H1 (cell line): ENCODE measurements at regions of chr3 and their contacts with region 1.

Region 1: GRCh38 chr3:49703443-49703927 is 14.1 kb downstream of the RNF123 start:
- DNase-seq: peak in 1 of 2 experiments; percentile 76
- H3K4me3 ChIP-seq: no peak overlapping the region
- H3K27ac ChIP-seq: no peak overlapping the region
- H3K4me1 ChIP-seq: peaks cover 0 to 9% (median 5%) of the 10 kb centered on the region in 4 experiments; a peak in 5 of 7 replicates
- H3K27me3 ChIP-seq: no peaks in the 10 kb centered on the region
- CTCF ChIP-seq: peak in 2 of 3 experiments; percentile 87 to 97; a peak in 3 of 4 replicates
- EP300 ChIP-seq: no peak
- POLR2A ChIP-seq: no peak
- RAD21 ChIP-seq: peak; percentile 88 to 91

Region 2: GRCh38 chr3:49634736-49635135 is 68.7 kb before region 1 on chr3:
- CTCF ChIA-PET with region 1: no interaction called
- POLR2A ChIA-PET with region 1: no interaction called
- DNase-seq: no peak
- H3K4me3 ChIP-seq: no peak overlapping the region
- H3K27ac ChIP-seq: no peak overlapping the region
- H3K4me1 ChIP-seq: peaks cover 0 to 3% (median 0%) of the 10 kb centered on the region in 4 experiments; a peak in 1 of 7 replicates
- H3K27me3 ChIP-seq: no peaks in the 10 kb centered on the region
- CTCF ChIP-seq: peak in 2 of 3 experiments; percentile 31 to 43; a peak in 3 of 4 replicates
- EP300 ChIP-seq: no peak
- POLR2A ChIP-seq: no peak
- RAD21 ChIP-seq: peak in 1 of 2 experiments; percentile 44; a peak in 2 of 4 replicates

Region 3: DNA sequence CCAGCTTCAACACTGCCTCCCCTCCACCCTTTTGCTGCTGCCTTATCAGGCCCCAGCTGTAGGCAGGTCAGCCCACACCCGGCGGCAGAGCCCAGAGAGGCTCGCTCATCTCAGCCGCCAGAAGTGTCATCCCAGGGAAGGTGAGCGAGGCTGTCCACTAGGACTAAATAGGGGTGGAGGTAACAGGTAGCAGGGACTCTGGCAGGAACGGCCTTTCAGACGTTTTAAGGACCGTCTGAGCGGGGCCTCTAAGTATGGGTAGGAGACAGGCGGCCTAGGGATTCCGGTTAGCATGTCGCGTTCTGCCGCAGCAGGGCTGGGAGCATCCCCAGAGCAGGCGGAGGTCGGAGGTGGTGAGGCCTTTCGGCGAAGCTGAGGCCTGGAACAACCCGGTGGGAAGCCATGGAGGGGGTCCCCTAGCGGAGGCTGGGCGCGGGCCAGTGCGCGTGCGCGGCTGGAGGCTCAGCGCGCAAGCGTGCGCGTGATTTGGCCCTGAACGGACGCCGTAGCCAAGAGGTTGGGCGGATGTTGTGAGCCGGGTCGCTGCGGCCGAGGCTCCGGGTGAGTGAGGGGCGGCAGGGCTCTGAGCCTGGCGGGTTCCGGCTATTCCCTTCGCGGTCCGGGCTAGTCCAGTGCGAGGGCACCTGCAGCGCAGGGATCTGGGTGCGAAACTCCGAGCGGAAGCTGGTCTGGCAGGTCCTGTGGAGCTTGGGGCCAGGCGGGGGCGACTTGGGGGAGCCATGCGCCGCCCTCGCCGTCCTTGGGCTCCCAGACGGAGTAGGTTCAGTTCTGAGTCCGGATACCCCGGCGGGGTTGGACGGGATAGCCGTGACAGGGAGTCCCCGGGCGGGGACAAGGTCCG is 14.2 kb before region 1 on chr3 and contains the starts of genes MST1 and RNF123:
- CTCF ChIA-PET with region 1: interaction called, 11 read pairs
- POLR2A ChIA-PET with region 1: interaction called, 3 read pairs
- DNase-seq: peak; percentile 81 to 98
- H3K4me3 ChIP-seq: peak within 1 kb of the TSS; percentile 81 to 98 (median 88)
- H3K27ac ChIP-seq: no peak within 1 kb of the TSS
- H3K4me1 ChIP-seq: peaks cover 0 to 8% (median 2%) of the 10 kb centered on the region in 4 experiments; a peak in 6 of 7 replicates
- H3K27me3 ChIP-seq: peaks cover 0 to 3% (median 3%) of the 10 kb centered on the region in 4 experiments; a peak in 2 of 7 replicates
- CTCF ChIP-seq: peak in 2 of 3 experiments; percentile 4 to 29; a peak in 2 of 4 replicates
- EP300 ChIP-seq: 0 out of 3 replicates have a peak, but pooled peaks of 1 of the 2 experiments have one; percentile 8
- POLR2A ChIP-seq: peak in 1 of 2 experiments; percentile 74; a peak in 2 of 3 replicates
- RAD21 ChIP-seq: no peak
- total RNA-seq, gene MST1: 6.2 and 8.5 TPM in 2 replicates
- total RNA-seq, gene RNF123: 30.5 and 34.2 TPM in 2 replicates

Region 4: GRCh38 chr3:49813497-49814174 is 110.2 kb after region 1 on chr3 and contains the start of gene UBA7:
- CTCF ChIA-PET with region 1: interaction called, 11 read pairs
- POLR2A ChIA-PET with region 1: no interaction called
- DNase-seq: no peak
- H3K4me3 ChIP-seq: no peak within 1 kb of the TSS
- H3K27ac ChIP-seq: no peak within 1 kb of the TSS
- H3K4me1 ChIP-seq: no peaks in the 10 kb centered on the region
- H3K27me3 ChIP-seq: peaks cover 0 to 3% (median 0%) of the 10 kb centered on the region in 4 experiments; a peak in 1 of 7 replicates
- CTCF ChIP-seq: no peak
- EP300 ChIP-seq: no peak
- POLR2A ChIP-seq: no peak
- RAD21 ChIP-seq: no peak
- total RNA-seq, gene UBA7: 0.34 and 1.9 TPM in 2 replicates

Region 5: DNA sequence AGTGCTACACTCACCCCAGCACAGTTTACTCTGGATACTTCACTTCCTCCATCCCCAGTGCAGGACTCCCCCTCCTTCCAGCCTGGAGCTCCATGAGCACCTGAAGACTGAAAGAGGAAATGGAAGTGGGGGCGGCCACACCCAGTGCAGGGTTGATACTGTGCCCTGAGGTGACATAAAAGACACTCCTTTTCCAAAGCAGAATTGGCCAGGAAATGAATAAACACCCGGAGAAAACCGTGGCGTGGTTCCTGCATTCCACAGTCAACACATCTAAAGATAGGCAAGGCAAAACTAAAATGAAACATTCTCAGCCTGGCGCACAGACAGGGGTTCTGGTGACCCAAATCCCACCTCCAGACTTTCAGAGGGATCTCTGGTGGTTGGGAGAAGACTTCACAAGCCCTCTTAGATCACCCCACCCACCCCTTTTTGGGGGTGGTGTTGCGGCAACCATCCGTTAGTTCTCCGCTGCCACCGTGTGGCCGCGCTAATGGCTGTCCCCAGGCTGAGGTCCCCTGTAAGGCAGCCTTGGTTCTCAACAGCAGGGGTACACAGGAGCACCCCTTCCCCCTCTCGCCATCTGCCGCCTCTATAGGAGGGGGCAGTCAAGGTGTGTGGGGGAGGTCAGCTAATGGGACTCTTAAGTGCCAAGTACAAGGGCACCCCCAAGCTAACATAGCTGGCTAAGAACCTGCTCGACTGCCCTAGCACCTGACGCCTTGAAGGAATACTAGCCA is 202.7 kb after region 1 on chr3:
- CTCF ChIA-PET with region 1: interaction called, 21 read pairs
- POLR2A ChIA-PET with region 1: no interaction called
- DNase-seq: peak in 1 of 2 experiments; percentile 77
- H3K4me3 ChIP-seq: peak overlapping the region in 1 of 4 experiments; percentile 10; a peak in 1 of 8 replicates
- H3K27ac ChIP-seq: no peak overlapping the region
- H3K4me1 ChIP-seq: peaks cover 2 to 43% (median 26%) of the 10 kb centered on the region in 4 experiments
- H3K27me3 ChIP-seq: peaks cover 0 to 20% (median 16%) of the 10 kb centered on the region in 4 experiments; a peak in 5 of 7 replicates
- CTCF ChIP-seq: peak in 2 of 3 experiments; percentile 89 to 90; a peak in 3 of 4 replicates
- EP300 ChIP-seq: no peak
- POLR2A ChIP-seq: no peak
- RAD21 ChIP-seq: peak; percentile 80 to 85